ENCODE measurements at regions of chr11 and their contacts with region 1.

Region 1: GRCh38 chr11:95231127-95231880 is at the start of gene SESN3:
- DNase-seq: peak; percentile 98
- ATAC-seq: peak; percentile 96
- total RNA-seq, gene SESN3: 5.7 TPM

Region 2: GRCh38 chr11:95050595-95051202 is 180.6 kb before region 1 on chr11:
- intact Hi-C with region 1: no loop called
- DNase-seq: no peak
- ATAC-seq: no peak

Region 3: GRCh38 chr11:95175818-95176368 is 55.4 kb before region 1 on chr11:
- intact Hi-C with region 1: no loop called
- DNase-seq: no peak
- ATAC-seq: no peak

Region 4: GRCh38 chr11:95337175-95337957 is 106.1 kb after region 1 on chr11:
- intact Hi-C with region 1: loop called (anchors 5 kb)
- DNase-seq: peak; percentile 83
- ATAC-seq: peak; percentile 82